ENCODE measurements at regions of chr19 and their contacts with region 1.

Region 1: GRCh38 chr19:44808463-44809371 is at the start of gene BCAM:
- DNase-seq: peak; percentile 86
- H3K4me3 ChIP-seq: peak within 1 kb of the TSS; percentile 79
- H3K4me3 Mint-ChIP-seq: peak within 1 kb of the TSS; percentile 82
- H3K27ac Mint-ChIP-seq: peak within 1 kb of the TSS; percentile 95
- H3K4me1 ChIP-seq: peaks cover 27% of the 10 kb centered on the region
- H3K4me1 Mint-ChIP-seq: peaks cover 45% of the 10 kb centered on the region
- H3K27me3 ChIP-seq: no peaks in the 10 kb centered on the region
- H3K27me3 Mint-ChIP-seq: no peaks in the 10 kb centered on the region
- CTCF ChIP-seq: no peak
- total RNA-seq, gene BCAM: 230 and 244 TPM in 2 replicates

Region 2: DNA sequence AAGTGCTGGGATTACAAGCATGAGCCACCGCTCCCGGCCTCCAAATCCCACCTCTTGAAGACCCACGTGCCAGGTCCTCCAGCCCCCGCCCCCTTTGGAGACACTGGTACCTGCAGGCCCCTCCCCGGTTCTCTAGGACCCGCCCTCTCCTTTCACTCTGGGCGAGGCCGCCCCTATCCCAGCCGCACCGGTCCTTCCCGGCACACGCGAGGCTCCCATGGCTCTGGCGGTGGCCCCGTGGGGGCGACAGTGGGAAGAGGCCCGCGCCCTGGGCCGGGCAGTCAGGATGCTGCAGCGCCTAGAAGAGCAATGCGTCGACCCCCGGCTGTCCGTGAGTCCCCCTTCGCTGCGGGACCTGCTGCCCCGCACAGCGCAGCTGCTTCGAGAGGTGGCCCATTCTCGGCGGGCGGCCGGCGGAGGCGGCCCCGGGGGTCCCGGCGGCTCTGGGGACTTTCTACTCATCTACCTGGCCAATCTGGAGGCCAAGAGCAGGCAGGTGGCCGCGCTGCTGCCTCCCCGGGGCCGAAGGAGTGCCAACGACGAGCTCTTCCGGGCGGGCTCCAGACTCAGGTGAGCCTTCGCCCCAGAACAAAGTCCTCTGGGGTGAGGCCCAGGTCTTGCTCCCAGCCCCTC is 30.9 kb before region 1 on chr19 and contains the start of gene CBLC:
- CTCF ChIA-PET with region 1: interaction called, 32 read pairs
- POLR2A ChIA-PET with region 1: interaction called, 4 read pairs
- intact Hi-C with region 1: loop called (anchors 2 kb)
- DNase-seq: peak; percentile 97 to 98
- H3K4me3 ChIP-seq: peak within 1 kb of the TSS; percentile 83
- H3K4me3 Mint-ChIP-seq: peak within 1 kb of the TSS; percentile 73
- H3K27ac Mint-ChIP-seq: peak within 1 kb of the TSS; percentile 91
- H3K4me1 ChIP-seq: peaks cover 15% of the 10 kb centered on the region
- H3K4me1 Mint-ChIP-seq: peaks cover 5% of the 10 kb centered on the region
- H3K27me3 ChIP-seq: no peaks in the 10 kb centered on the region
- H3K27me3 Mint-ChIP-seq: no peaks in the 10 kb centered on the region
- CTCF ChIP-seq: peak in 1 of 2 experiments; percentile 38
- total RNA-seq, gene CBLC: 42.3 and 43.6 TPM in 2 replicates

Region 3: DNA sequence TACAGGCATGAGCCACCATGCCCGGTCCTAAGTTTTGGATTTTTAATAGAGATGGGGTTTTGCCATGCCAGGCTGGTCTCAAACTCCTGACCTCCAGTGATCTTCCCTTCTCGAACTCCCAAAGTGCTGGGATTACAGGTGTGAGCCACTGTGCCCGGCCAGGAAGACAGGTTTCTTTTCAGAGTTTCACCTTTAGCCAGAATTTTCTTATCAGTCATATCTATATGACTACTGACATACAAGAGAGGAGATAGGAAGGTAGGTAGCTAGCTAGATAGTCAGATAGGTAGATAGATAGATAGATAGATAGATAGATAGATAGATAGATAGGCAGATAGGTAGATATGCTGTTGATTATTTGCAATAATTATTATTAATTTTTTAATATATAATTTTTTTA is 23.5 kb before region 1 on chr19:
- CTCF ChIA-PET with region 1: interaction called, 32 read pairs
- POLR2A ChIA-PET with region 1: interaction called, 11 read pairs
- intact Hi-C with region 1: loop called (anchors 1 kb)
- DNase-seq: no peak
- H3K4me3 ChIP-seq: no peak overlapping the region
- H3K4me3 Mint-ChIP-seq: no peak overlapping the region
- H3K27ac Mint-ChIP-seq: no peak overlapping the region
- H3K4me1 ChIP-seq: peaks cover 5% of the 10 kb centered on the region; the same call in 1 of the 2 replicates
- H3K4me1 Mint-ChIP-seq: peaks cover 14% of the 10 kb centered on the region
- H3K27me3 ChIP-seq: no peaks in the 10 kb centered on the region
- H3K27me3 Mint-ChIP-seq: no peaks in the 10 kb centered on the region
- CTCF ChIP-seq: no peak

Region 4: DNA sequence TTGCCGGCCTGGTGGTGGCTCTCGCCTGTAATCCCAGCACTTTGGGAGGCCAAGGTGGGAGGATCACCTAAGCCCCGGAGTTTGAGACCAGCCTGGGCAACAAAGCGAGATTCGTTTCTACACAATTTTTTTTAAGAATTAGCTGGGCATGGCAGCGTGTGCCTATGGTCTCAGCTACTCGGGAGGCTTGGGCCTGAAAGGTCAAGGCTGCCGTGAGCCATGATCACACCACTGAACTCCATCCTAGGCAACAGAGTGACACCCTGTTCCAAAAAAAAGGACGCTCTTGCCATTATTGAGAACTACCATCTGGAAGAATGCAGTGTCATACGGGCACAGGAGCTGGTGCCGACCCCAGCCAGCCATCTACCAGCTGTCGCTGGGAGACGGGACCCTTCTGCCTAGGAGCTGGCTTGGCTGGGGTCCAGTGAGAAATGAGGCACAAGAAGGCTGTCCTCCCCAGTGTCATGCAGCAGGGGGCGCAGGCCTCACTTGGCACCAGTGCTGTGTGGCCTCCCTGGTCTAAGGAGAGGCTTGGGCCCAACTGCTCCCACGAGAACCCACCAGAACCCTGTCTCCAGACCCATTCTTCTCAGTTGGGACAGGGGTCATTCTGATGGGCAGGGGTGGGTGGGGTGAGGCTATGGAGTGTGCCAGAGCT is 180.3 kb after region 1 on chr19:
- CTCF ChIA-PET with region 1: no interaction called
- POLR2A ChIA-PET with region 1: no interaction called
- intact Hi-C with region 1: no loop called
- DNase-seq: peak in 1 of 2 experiments; percentile 70
- H3K4me3 ChIP-seq: no peak overlapping the region
- H3K4me3 Mint-ChIP-seq: no peak overlapping the region
- H3K27ac Mint-ChIP-seq: no peak overlapping the region
- H3K4me1 ChIP-seq: no peaks in the 10 kb centered on the region
- H3K4me1 Mint-ChIP-seq: no peaks in the 10 kb centered on the region
- H3K27me3 ChIP-seq: no peaks in the 10 kb centered on the region
- H3K27me3 Mint-ChIP-seq: no peaks in the 10 kb centered on the region
- CTCF ChIP-seq: peak; percentile 59 to 74

Measured in Caco-2 (cell line).